ENCODE measurements at regions of chr19 and their contacts with region 1.

Region 1: DNA sequence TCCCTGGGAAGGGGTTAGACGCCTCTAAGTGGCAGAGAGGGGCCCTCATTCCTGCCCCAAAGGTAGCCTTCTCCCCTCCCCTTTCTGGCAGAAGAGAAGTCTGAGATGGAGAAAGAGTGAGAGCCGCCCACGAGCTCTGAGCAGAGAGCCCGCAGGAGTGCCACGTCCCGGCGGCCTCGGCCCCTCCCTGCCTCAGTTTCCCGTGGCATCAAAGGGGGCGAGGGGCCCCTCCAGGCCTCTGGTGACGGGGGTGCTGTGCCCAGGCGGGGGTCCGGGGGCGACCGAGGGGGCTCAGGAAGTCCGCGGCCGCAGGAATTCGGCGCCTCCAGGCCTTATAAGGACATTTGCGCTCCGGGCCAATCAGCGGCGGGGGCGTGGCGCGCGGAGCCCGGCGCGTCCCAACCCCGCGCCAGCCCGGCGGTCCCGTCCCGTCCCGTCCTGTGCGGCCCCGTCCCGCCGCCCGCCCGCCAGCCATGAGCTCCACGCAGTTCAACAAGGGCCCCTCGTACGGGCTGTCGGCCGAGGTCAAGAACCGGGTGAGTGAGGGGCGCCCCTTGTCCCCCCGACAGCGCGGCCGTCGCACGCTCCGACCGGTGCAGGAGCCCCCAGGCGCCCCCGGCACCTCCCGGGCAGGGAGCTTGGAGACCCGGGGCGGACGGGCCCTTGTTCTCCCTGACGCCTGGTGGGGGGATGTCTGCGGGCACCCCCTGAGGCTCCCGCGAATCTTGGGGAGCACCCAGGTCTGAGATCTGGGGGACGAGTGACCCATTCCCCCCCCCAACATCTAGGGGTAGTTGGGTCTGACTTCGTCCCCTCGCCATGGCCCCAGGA is at the start of gene CNN2:
- DNase-seq: peak; percentile 94
- H3K4me3 Mint-ChIP-seq: peak within 1 kb of the TSS; percentile 94
- H3K27ac Mint-ChIP-seq: peak within 1 kb of the TSS; percentile 86
- H3K4me1 Mint-ChIP-seq: peaks cover 21% of the 10 kb centered on the region
- H3K27me3 Mint-ChIP-seq: no peaks in the 10 kb centered on the region
- total RNA-seq, gene CNN2: 112 TPM in 2 replicates

Region 2: GRCh38 chr19:1064661-1065605 is 38.5 kb after region 1 on chr19:
- intact Hi-C with region 1: loop called (anchors 2 kb)
- DNase-seq: peak; percentile 94
- H3K4me3 Mint-ChIP-seq: peak overlapping the region; percentile 48
- H3K27ac Mint-ChIP-seq: peak overlapping the region; percentile 44
- H3K4me1 Mint-ChIP-seq: peaks cover 29% of the 10 kb centered on the region
- H3K27me3 Mint-ChIP-seq: no peaks in the 10 kb centered on the region

Region 3: DNA sequence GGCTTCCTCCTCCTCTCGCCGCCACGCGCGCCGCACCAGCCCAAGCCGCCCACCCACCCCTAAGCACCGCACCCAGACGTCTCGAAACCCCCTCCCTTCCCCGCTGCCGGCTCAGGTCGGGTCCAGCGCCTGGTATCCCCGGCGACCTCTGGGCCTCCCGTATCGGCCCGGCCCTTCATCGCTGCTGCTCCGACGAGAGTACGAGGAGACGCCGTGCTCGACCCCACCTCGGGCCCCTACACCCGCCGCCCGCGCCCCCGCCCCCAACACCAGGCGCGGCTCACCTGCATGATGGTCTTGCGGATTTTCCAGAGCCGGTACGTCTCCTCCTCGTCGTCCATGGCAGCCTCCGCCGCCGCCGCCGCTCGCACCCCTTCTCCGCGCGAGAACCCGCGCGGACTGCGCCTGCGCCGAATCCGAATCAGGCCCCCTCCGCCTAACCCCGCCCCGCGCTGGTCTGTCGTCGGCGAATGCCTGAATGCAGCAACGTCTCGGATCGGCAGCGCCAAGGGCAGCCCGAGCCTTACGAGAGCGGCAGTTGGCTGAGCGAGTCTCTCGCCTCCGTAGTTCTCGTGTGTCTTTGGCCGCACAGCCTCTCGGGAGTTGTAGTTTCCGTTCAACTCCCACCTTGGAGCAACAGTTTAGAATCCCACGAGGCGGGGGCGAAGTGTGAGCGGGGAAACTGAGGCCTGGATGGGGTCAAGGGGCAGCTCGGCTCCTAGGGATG is 68.7 kb after region 1 on chr19 and contains the start of gene POLR2E:
- intact Hi-C with region 1: loop called (anchors 1 kb)
- DNase-seq: peak; percentile 100
- H3K4me3 Mint-ChIP-seq: peak within 1 kb of the TSS; percentile 95
- H3K27ac Mint-ChIP-seq: peak within 1 kb of the TSS; percentile 93
- H3K4me1 Mint-ChIP-seq: peaks cover 37% of the 10 kb centered on the region
- H3K27me3 Mint-ChIP-seq: no peaks in the 10 kb centered on the region
- total RNA-seq, gene POLR2E: 273 and 274 TPM in 2 replicates

Region 4: GRCh38 chr19:1131738-1132551 is 105.5 kb after region 1 on chr19:
- intact Hi-C with region 1: no loop called
- DNase-seq: peak; percentile 97
- H3K4me3 Mint-ChIP-seq: peak overlapping the region; percentile 93
- H3K27ac Mint-ChIP-seq: peak overlapping the region; percentile 90
- H3K4me1 Mint-ChIP-seq: peaks cover 19% of the 10 kb centered on the region
- H3K27me3 Mint-ChIP-seq: no peaks in the 10 kb centered on the region

Region 5: GRCh38 chr19:1189419-1189818 is 163.0 kb after region 1 on chr19:
- intact Hi-C with region 1: loop called (anchors 5 kb)
- DNase-seq: peak; percentile 85
- H3K4me3 Mint-ChIP-seq: peak overlapping the region; percentile 36
- H3K27ac Mint-ChIP-seq: peak overlapping the region; percentile 68
- H3K4me1 Mint-ChIP-seq: peaks cover 27% of the 10 kb centered on the region
- H3K27me3 Mint-ChIP-seq: no peaks in the 10 kb centered on the region

Measured in activated CD4-positive, alpha-beta T cell treated with anti-CD3 and anti-CD28 coated beads, Interleukin-2, amount 10 ng/mL, durations not matched to agents 24 days and 14 days (primary cell).